IMR-90 (cell line): ENCODE measurements at regions of chr13 and their contacts with region 1.

Region 1: DNA sequence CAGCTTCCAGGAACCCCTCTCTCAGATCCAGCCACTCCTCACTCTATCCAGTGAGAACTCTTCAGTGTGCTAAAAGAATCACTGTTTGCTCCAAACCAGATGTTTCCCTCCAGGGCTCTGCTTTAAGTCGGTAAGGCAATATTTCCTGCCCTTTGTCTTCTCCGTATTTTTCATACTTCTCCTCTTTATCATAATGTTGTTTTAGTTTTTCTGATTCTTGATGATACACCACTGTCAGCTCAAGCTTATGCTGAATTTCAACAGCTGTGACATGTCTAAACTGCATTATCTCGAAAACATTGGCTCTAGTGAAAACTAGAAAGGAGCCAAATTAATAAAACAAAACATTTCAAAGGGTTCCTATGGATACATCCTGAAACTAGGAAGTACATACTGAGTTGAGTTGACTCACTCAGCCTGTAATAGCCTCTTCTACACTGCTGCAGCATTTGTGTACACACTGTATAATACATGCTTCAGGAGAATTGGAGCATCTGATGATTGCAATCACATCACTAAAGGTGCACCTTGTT is 39.8 kb downstream of the GPR180 start:
- DNase-seq: peak; percentile 86
- ATAC-seq: peak; percentile 96
- H3K4me3 ChIP-seq: no peak overlapping the region
- H3K27ac ChIP-seq: no peak overlapping the region; the same call in 1 of the 2 replicates
- H3K4me1 ChIP-seq: peaks cover 3% of the 10 kb centered on the region; the same call in 1 of the 2 replicates
- H3K27me3 ChIP-seq: no peaks in the 10 kb centered on the region
- CTCF ChIP-seq: no peak
- POLR2A ChIP-seq: no peak
- RAD21 ChIP-seq: no peak

Region 2: GRCh38 chr13:94656766-94657165 is 15.3 kb after region 1 on chr13:
- CTCF ChIA-PET with region 1: interaction called, 3 read pairs
- POLR2A ChIA-PET with region 1: interaction called, 20 read pairs
- dilution Hi-C with region 1: no loop called
- in situ Hi-C with region 1: no loop called
- intact Hi-C with region 1: no loop called
- DNase-seq: peak; percentile 99
- ATAC-seq: peak; percentile 98
- H3K4me3 ChIP-seq: no peak overlapping the region
- H3K27ac ChIP-seq: no peak overlapping the region
- H3K4me1 ChIP-seq: peaks cover 9% of the 10 kb centered on the region
- H3K27me3 ChIP-seq: peaks cover 5% of the 10 kb centered on the region
- CTCF ChIP-seq: peak; percentile 21; the same call in 1 of the 2 replicates
- POLR2A ChIP-seq: no peak
- RAD21 ChIP-seq: no peak